Endothelial cell of umbilical vein (primary cell): ENCODE measurements at regions of chr7 and their contacts with region 1.

Region 1: DNA sequence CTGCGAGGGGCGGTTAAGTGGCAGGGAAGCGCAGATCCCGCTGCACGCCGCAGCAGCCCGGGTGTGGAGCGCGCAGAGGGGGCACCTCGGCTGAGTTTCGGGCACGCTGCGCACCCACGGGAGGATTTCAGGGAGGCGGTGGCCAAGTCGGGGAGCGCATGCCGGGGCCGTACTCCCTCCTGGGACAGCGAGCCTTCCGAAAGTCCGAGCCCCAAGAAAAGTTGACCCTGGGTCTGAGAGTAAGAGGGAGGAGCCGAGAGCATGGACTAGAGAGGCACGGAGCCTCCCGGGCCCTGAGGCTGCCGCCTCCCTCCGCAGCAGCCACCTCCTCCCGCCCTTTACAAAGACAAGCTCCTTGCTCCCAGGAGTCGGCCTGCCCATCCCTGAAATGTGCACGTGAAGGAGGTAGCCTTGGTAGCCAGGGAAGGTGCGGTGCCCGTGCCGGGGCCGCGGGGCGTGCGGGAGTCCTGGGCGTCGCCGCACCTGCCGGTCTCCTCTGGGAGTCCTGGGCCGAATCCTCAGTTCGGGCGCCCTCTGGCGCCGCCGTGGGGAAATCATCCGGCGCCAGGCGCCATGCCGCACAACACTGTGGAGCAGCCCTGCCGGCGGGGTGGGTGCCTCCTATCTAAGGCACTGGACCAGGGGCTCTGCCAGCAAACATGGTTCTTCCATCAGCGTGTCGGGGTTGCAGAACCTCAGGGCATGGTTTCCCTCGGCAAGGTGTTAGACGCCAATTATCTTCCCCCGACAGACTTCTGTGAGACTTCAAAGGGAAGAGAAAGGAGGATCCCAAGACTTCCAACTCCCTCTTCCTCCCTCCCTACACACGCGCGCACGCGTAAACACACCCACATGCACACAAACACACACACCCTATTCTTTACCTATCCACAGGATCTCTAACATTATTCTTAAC is 104.0 kb downstream of the TRIL start:
- DNase-seq: peak; percentile 72
- H3K4me3 ChIP-seq: peak overlapping the region; percentile 4 to 40 (median 28)
- H3K27ac ChIP-seq: no peak overlapping the region
- H3K4me1 ChIP-seq: peaks cover 5% of the 10 kb centered on the region
- H3K27me3 ChIP-seq: peaks cover 21 to 34% of the 10 kb centered on the region in 2 experiments
- CTCF ChIP-seq: peak; percentile 87 to 94
- POLR2A ChIP-seq: no peak

Region 2: GRCh38 chr7:28298870-28299518 is 555.1 kb before region 1 on chr7:
- CTCF ChIA-PET with region 1: interaction called, 20 read pairs
- POLR2A ChIA-PET with region 1: no interaction called
- dilution Hi-C with region 1: no loop called
- intact Hi-C with region 1: loop called (anchors 1 kb)
- DNase-seq: peak; percentile 53
- H3K4me3 ChIP-seq: no peak overlapping the region
- H3K27ac ChIP-seq: no peak overlapping the region
- H3K4me1 ChIP-seq: no peaks in the 10 kb centered on the region
- H3K27me3 ChIP-seq: no peaks in the 10 kb centered on the region
- CTCF ChIP-seq: peak; percentile 36 to 48
- POLR2A ChIP-seq: no peak

Region 3: GRCh38 chr7:28389504-28390395 is 464.3 kb before region 1 on chr7:
- CTCF ChIA-PET with region 1: interaction called, 5 read pairs
- POLR2A ChIA-PET with region 1: no interaction called
- dilution Hi-C with region 1: no loop called
- intact Hi-C with region 1: loop called (anchors 1 kb)
- DNase-seq: peak; percentile 76
- H3K4me3 ChIP-seq: peak overlapping the region in 2 of 3 experiments; percentile 1 to 54
- H3K27ac ChIP-seq: no peak overlapping the region
- H3K4me1 ChIP-seq: no peaks in the 10 kb centered on the region
- H3K27me3 ChIP-seq: peaks cover 10 to 13% of the 10 kb centered on the region in 2 experiments
- CTCF ChIP-seq: peak; percentile 39 to 41
- POLR2A ChIP-seq: no peak

Region 4: DNA sequence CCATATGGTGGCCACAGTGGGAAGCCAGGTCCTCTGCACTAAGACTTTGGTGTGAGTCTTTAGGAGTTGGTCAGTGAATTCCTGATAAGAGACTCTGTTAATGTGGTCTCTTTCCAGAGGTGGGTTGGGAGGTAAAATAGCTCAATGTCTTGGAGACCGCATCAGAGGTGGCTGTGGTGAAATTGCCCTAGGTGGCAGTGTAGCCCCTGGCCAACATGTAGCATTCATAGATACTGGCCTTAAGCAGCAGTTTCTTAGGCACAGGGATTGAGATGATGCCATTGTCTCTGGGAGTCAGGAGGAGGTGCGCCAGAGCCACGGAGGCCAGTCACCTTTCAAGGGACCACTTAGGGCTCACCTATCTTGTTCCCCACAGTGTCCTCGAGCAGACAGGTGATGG is 239.0 kb before region 1 on chr7:
- CTCF ChIA-PET with region 1: interaction called, 29 read pairs
- POLR2A ChIA-PET with region 1: no interaction called
- dilution Hi-C with region 1: no loop called
- intact Hi-C with region 1: loop called (anchors 1 kb)
- DNase-seq: peak; percentile 42
- H3K4me3 ChIP-seq: no peak overlapping the region
- H3K27ac ChIP-seq: no peak overlapping the region
- H3K4me1 ChIP-seq: no peaks in the 10 kb centered on the region
- H3K27me3 ChIP-seq: no peaks in the 10 kb centered on the region
- CTCF ChIP-seq: peak in 1 of 2 donors; percentile 45
- POLR2A ChIP-seq: no peak

Region 5: GRCh38 chr7:29071203-29071874 is 217.2 kb after region 1 on chr7:
- CTCF ChIA-PET with region 1: no interaction called
- POLR2A ChIA-PET with region 1: no interaction called
- dilution Hi-C with region 1: no loop called
- intact Hi-C with region 1: no loop called
- DNase-seq: no peak
- H3K4me3 ChIP-seq: no peak overlapping the region
- H3K27ac ChIP-seq: no peak overlapping the region
- H3K4me1 ChIP-seq: no peaks in the 10 kb centered on the region
- H3K27me3 ChIP-seq: peaks cover 4 to 8% of the 10 kb centered on the region in 2 experiments
- CTCF ChIP-seq: no peak
- POLR2A ChIP-seq: no peak

Region 6: DNA sequence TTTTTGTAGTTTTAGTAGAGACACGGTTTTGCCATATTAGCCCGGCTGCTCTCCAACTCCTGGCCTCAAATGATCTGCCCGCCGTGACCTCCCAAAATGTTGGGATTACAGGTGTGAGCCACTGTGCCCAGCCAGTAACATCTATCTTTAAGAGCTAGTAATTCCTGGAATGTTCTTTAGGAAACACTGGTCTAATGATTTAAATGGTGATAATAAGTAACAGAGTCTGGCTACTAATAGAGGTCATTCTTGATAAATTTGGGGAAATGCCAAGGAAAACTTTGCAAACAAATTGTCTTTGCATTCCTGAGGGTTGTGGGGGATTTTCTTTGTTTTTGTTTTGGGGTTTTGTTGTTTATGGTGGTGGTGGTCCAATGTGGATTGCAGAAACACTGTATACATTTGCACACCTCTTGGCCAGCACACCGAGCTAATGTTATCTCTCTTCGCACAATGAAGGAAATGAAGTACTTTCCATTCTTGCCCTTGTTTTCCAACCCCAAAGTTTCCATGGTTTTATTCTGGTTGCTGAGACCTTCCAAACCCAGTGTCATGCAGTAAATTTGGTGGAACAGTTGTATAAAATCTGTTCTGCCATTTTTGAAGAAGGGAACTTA is 900.9 kb after region 1 on chr7:
- CTCF ChIA-PET with region 1: no interaction called
- POLR2A ChIA-PET with region 1: no interaction called
- dilution Hi-C with region 1: no loop called
- intact Hi-C with region 1: no loop called
- DNase-seq: peak; percentile 89
- H3K4me3 ChIP-seq: no peak overlapping the region
- H3K27ac ChIP-seq: no peak overlapping the region
- H3K4me1 ChIP-seq: peaks cover 6% of the 10 kb centered on the region
- H3K27me3 ChIP-seq: peaks cover 2 to 4% of the 10 kb centered on the region in 2 experiments
- CTCF ChIP-seq: no peak
- POLR2A ChIP-seq: no peak